AG04450 (cell line): ENCODE measurements at regions of chr10 and their contacts with region 1.

Region 1: GRCh38 chr10:71696628-71697326 is 22.8 kb downstream of the C10orf105 start:
- DNase-seq: no peak
- H3K4me3 ChIP-seq: no peak overlapping the region
- H3K27ac ChIP-seq: no peak overlapping the region
- H3K27me3 ChIP-seq: peaks cover 27% of the 10 kb centered on the region
- CTCF ChIP-seq: peak; percentile 90

Region 2: DNA sequence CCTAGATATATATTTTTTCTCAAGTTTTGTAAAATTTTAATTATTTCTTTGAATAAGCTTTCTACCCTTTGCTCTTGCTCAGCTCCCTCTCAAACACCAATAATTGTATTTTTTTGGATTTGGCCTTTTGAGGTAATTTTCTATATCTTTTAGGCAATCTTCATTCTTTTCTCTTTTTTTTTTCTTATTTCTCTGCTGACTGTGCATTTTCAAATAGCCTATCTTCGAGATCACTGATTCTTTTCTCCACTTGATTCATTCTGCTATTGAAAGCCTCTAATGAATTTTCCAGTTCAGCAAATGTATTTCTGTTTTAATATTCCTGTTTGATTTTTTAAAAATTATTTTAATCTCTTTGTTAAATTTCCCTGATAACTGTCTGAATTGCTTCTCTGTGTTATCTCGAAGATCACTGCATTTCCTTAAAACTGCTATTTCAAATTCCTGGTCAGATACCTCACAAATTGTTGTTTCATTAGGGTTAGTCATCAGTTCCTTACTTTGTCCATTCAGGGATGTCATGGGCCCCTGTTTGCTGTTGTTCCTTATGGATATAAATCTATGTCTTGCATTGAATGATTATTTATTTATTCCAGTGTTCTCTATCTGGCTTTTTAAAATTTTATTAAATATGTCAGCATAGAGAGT is 584.5 kb before region 1 on chr10:
- CTCF ChIA-PET with region 1: no interaction called
- POLR2A ChIA-PET with region 1: no interaction called
- DNase-seq: no peak
- H3K4me3 ChIP-seq: no peak overlapping the region
- H3K27ac ChIP-seq: no peak overlapping the region
- H3K27me3 ChIP-seq: no peaks in the 10 kb centered on the region
- CTCF ChIP-seq: no peak

Region 3: GRCh38 chr10:71314028-71314693 is 382.6 kb before region 1 on chr10:
- CTCF ChIA-PET with region 1: interaction called, 27 read pairs
- POLR2A ChIA-PET with region 1: no interaction called
- DNase-seq: no peak
- H3K4me3 ChIP-seq: no peak overlapping the region
- H3K27ac ChIP-seq: no peak overlapping the region
- H3K27me3 ChIP-seq: peaks cover 14% of the 10 kb centered on the region
- CTCF ChIP-seq: peak; percentile 79

Region 4: GRCh38 chr10:71684356-71685173 is 12.2 kb before region 1 on chr10:
- CTCF ChIA-PET with region 1: interaction called, 12 read pairs
- POLR2A ChIA-PET with region 1: no interaction called
- DNase-seq: no peak
- H3K4me3 ChIP-seq: no peak overlapping the region
- H3K27ac ChIP-seq: no peak overlapping the region
- H3K27me3 ChIP-seq: peaks cover 40% of the 10 kb centered on the region
- CTCF ChIP-seq: no peak

Region 5: DNA sequence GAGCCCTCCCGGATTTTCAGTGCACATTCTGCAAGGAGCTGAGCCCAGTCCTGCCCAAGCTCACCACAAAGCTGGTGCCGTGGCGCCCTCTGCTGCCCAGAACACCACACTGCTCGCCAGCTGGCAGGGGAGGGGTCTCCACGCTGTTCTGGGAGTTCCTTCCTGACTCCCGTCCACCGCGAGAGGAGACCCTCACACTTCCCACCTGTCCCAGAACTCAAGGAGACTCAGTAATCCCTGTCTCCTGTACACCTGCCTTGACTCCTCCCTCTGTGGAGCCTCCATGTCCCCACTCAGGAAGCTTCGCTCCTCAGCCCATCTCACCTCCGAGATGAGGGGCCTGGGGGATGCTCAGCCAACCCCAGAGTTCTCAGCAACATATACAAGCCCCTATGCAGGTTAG is 11.5 kb after region 1 on chr10:
- CTCF ChIA-PET with region 1: interaction called, 27 read pairs
- POLR2A ChIA-PET with region 1: no interaction called
- DNase-seq: no peak
- H3K4me3 ChIP-seq: no peak overlapping the region
- H3K27ac ChIP-seq: no peak overlapping the region
- H3K27me3 ChIP-seq: peaks cover 31% of the 10 kb centered on the region
- CTCF ChIP-seq: peak; percentile 74

Region 6: DNA sequence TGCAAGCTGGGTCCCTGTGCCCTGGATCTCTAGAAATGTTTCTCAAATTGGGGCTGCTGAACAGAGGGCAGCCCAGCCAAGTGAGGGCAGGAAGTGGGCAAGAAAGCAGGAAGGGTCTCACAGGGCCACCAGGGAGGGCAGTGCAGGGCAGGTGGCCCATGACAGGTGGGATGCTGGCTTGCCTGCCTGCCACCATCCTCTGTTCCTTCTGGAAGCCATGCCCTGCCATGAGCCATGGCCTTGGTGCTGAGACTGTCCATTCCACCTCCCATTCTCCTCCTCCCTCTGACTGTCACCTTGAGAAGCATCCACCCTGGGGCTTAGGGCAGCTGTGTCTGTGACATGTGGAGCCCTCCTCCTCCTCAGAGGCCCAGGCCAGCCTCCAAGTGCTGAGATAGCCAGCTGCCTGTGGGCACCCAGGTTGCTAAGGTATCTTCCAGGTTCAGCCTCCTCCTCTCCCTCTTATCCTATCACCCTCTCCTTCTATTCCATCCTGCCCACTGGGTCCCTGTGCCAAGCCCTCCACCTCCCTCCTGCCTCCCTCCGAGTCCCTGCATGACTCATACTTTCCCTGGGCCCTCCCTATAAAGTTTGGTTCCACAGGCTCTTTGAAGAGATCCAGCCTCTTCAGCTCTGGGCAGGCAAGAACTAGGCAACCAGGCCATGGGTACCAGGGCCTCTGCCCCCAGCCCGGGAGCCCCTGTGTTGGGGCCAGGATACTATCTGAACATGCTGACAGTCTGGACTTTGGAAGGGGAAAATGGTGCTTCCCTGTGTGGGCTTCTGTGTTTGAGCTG is 75.2 kb after region 1 on chr10:
- CTCF ChIA-PET with region 1: interaction called, 20 read pairs
- POLR2A ChIA-PET with region 1: no interaction called
- DNase-seq: no peak
- H3K4me3 ChIP-seq: peak overlapping the region; percentile 70
- H3K27ac ChIP-seq: peak overlapping the region; percentile 39
- H3K27me3 ChIP-seq: no peaks in the 10 kb centered on the region
- CTCF ChIP-seq: no peak

Region 7: GRCh38 chr10:71812016-71812912 is 115.5 kb after region 1 on chr10:
- CTCF ChIA-PET with region 1: interaction called, 10 read pairs
- POLR2A ChIA-PET with region 1: no interaction called
- DNase-seq: no peak
- H3K4me3 ChIP-seq: no peak overlapping the region
- H3K27ac ChIP-seq: no peak overlapping the region
- H3K27me3 ChIP-seq: peaks cover 5% of the 10 kb centered on the region
- CTCF ChIP-seq: peak; percentile 86